Caco-2 (cell line): ENCODE measurements at regions of chrX and their contacts with region 1.

Region 1: DNA sequence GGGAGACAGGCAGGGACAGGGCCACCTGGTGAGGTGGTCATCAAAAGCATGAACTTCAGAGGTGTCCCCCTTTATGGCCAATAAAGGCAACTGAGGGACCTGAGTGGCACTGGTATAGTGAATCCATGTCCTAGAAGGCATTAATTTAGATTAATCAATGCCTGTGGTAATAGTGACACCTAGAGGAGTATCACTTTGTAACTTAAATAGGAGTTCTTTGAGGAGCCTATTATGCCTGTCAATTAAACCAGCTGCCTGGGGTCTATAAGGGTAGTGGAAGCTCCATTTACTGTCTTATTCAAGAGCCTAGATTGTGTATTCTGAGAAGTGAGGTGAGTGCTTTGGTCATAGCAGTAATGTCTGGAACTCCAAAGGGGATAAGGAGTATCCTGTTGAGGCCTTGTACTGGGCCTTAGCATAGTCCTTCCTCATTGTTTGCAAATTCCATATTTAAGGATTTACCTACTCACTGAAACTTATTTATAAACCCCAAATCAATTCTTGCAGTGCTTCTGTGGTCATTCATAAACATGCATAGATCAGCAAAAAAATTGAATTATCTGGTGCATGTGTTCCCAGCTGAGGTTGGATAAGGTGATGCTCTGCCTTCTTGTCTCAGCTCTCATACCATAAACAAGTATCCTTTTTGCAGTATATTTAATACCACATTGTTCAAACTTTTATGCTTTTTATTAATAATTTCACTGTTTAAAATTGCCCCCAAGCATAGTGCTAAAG is 213.8 kb upstream of the RADX start:
- DNase-seq: no peak
- H3K4me3 ChIP-seq: no peak overlapping the region
- H3K4me3 Mint-ChIP-seq: no peak overlapping the region
- H3K27ac Mint-ChIP-seq: no peak overlapping the region
- H3K4me1 ChIP-seq: no peaks in the 10 kb centered on the region
- H3K4me1 Mint-ChIP-seq: no peaks in the 10 kb centered on the region
- H3K27me3 ChIP-seq: no peaks in the 10 kb centered on the region
- H3K27me3 Mint-ChIP-seq: no peaks in the 10 kb centered on the region
- CTCF ChIP-seq: no peak

Region 2: DNA sequence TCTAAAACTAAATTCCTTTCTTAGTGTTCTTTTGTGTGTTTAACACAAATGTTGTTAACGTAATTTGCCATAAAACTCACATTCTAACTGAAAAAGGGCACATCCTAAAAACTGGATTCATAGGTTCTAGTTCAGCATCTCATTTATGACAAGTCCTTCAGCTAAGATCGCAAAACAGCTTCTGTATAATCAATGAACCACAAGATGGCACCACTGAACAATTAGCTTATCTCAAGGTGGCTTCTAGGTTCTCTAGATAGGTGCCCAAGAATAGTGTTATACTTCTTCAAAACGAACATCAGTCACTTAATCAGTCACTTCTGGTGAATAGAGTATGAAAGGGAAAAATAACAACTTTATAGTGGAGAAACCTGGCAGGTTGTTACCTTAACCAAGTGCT is 521.3 kb before region 1 on chrX:
- CTCF ChIA-PET with region 1: no interaction called
- POLR2A ChIA-PET with region 1: no interaction called
- intact Hi-C with region 1: loop called (anchors 5 kb)
- DNase-seq: peak in 1 of 2 experiments; percentile 7
- H3K4me3 ChIP-seq: no peak overlapping the region
- H3K4me3 Mint-ChIP-seq: no peak overlapping the region
- H3K27ac Mint-ChIP-seq: no peak overlapping the region
- H3K4me1 ChIP-seq: no peaks in the 10 kb centered on the region
- H3K4me1 Mint-ChIP-seq: no peaks in the 10 kb centered on the region
- H3K27me3 ChIP-seq: no peaks in the 10 kb centered on the region
- H3K27me3 Mint-ChIP-seq: peaks cover 6% of the 10 kb centered on the region
- CTCF ChIP-seq: peak; percentile 9 to 19

Region 3: DNA sequence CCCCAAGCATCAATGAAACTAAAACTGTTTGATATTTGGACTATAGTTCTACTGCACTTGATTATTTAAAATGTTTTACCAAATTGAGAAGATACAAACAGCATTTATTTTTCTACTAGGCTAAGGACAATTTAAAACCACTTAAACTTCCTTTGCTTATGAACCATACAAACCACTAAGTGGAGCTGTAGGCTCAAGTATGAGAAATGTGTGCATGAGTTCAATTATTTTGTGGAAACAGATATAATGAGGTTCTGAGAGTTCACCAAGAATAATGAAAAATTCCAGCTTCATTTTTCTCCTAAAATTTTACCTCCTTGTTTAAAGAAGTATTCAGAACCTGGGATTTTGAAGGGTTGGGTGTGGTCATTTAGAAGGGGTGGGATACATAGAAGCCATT is 422.6 kb before region 1 on chrX:
- CTCF ChIA-PET with region 1: no interaction called
- POLR2A ChIA-PET with region 1: no interaction called
- intact Hi-C with region 1: loop called (anchors 1 kb)
- DNase-seq: no peak
- H3K4me3 ChIP-seq: no peak overlapping the region
- H3K4me3 Mint-ChIP-seq: no peak overlapping the region
- H3K27ac Mint-ChIP-seq: no peak overlapping the region
- H3K4me1 ChIP-seq: no peaks in the 10 kb centered on the region
- H3K4me1 Mint-ChIP-seq: no peaks in the 10 kb centered on the region
- H3K27me3 ChIP-seq: no peaks in the 10 kb centered on the region
- H3K27me3 Mint-ChIP-seq: no peaks in the 10 kb centered on the region
- CTCF ChIP-seq: peak in 1 of 2 experiments; percentile 0

Region 4: GRCh38 chrX:106039920-106040319 is 358.1 kb before region 1 on chrX:
- CTCF ChIA-PET with region 1: no interaction called
- POLR2A ChIA-PET with region 1: no interaction called
- intact Hi-C with region 1: loop called (anchors 1 kb)
- DNase-seq: peak in 1 of 2 experiments; percentile 3
- H3K4me3 ChIP-seq: no peak overlapping the region
- H3K4me3 Mint-ChIP-seq: no peak overlapping the region
- H3K27ac Mint-ChIP-seq: no peak overlapping the region
- H3K4me1 ChIP-seq: no peaks in the 10 kb centered on the region
- H3K4me1 Mint-ChIP-seq: peaks cover 9% of the 10 kb centered on the region
- H3K27me3 ChIP-seq: no peaks in the 10 kb centered on the region
- H3K27me3 Mint-ChIP-seq: peaks cover 3% of the 10 kb centered on the region
- CTCF ChIP-seq: peak in 1 of 2 experiments; percentile 45

Region 5: GRCh38 chrX:106170318-106170717 is 227.7 kb before region 1 on chrX:
- CTCF ChIA-PET with region 1: no interaction called
- POLR2A ChIA-PET with region 1: no interaction called
- intact Hi-C with region 1: loop called (anchors 1 kb)
- DNase-seq: peak in 1 of 2 experiments; percentile 3
- H3K4me3 ChIP-seq: no peak overlapping the region
- H3K4me3 Mint-ChIP-seq: no peak overlapping the region
- H3K27ac Mint-ChIP-seq: no peak overlapping the region
- H3K4me1 ChIP-seq: no peaks in the 10 kb centered on the region
- H3K4me1 Mint-ChIP-seq: peaks cover 7% of the 10 kb centered on the region
- H3K27me3 ChIP-seq: no peaks in the 10 kb centered on the region
- H3K27me3 Mint-ChIP-seq: peaks cover 4% of the 10 kb centered on the region
- CTCF ChIP-seq: peak; percentile 33 to 35